ENCODE measurements at regions of chr21 and their contacts with region 1.

Region 1: DNA sequence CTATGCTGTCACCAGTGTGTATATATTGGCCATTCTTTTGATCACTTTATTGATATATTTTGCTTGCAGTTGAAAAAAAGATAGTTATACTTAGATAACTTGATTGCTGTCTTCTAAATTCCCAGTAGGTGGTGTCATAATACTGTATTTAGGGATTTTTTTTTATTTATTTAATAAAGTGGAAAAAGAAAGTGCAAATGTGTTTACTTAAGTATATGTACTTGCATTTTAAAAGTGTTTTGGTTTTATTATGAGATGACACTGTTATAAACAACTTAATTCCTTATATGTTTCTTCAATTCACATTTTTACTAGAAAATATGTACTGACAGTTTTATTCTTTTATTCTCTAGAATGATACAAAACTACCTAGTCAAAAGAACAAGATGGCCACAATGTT is 164.8 kb downstream of the USP25 start:
- DNase-seq: no peak
- H3K4me3 ChIP-seq: no peak overlapping the region
- H3K27ac ChIP-seq: no peak overlapping the region
- H3K4me1 ChIP-seq: no peaks in the 10 kb centered on the region
- H3K27me3 ChIP-seq: no peaks in the 10 kb centered on the region
- CTCF ChIP-seq: peak; percentile 64

Region 2: DNA sequence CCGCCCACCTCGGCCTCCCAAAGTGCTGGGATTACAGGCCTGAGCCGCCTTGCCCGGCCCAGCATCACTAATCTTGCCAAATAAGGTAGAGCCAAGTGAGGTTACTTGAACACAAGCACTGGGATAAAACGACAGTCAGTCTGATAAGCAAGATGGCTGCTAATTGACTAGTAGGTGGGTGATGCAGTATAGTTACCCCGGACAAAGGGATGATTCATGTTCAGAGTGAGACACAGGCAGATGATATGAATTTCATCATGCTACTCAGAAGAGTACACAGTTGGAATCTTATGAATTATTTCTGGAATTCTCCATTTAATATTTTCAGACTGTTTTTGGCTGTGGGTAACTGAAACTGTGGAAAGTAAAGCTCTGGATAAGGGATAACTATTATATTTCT is 13.6 kb after region 1 on chr21:
- CTCF ChIA-PET with region 1: no interaction called
- POLR2A ChIA-PET with region 1: no interaction called
- intact Hi-C with region 1: no loop called
- DNase-seq: no peak
- H3K4me3 ChIP-seq: no peak overlapping the region
- H3K27ac ChIP-seq: no peak overlapping the region
- H3K4me1 ChIP-seq: no peaks in the 10 kb centered on the region
- H3K27me3 ChIP-seq: no peaks in the 10 kb centered on the region
- CTCF ChIP-seq: no peak

Region 3: DNA sequence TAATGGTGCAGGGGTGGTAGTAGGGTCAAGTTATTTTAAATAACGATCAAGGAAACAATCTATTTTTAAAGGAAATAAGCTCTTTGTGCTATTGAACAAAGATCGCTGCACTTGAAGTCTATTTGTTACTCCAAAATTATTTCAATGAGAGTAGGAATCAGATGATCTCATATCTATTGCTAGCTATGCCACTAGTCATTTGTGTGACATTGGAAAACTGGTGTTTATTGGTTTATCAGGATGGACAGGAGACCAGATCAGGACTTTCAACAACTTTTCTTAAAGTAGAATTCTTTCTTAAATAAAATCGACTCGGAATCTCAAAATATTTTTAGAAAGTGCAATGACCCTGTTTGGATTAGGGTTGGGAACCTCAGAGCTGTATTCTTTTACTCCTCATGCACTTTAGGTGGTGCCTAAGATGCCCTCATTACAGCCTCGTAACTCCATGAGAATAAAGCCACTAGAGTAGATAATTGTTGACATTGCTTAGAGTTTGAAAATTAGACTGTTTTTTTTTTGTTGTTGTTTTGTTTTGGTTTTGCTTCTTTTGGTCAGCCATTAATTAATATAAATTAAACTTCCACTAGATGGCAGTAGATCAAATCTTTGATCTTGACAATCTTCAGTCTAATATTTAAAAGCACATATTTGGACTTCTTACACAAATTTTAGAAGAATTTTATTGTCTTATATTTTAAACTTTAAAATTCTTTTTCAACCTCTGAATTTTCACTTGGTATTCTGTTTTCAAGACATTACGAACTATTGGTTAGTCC is 187.6 kb after region 1 on chr21:
- CTCF ChIA-PET with region 1: no interaction called
- POLR2A ChIA-PET with region 1: no interaction called
- intact Hi-C with region 1: no loop called
- DNase-seq: no peak
- H3K4me3 ChIP-seq: no peak overlapping the region
- H3K27ac ChIP-seq: no peak overlapping the region
- H3K4me1 ChIP-seq: no peaks in the 10 kb centered on the region
- H3K27me3 ChIP-seq: no peaks in the 10 kb centered on the region
- CTCF ChIP-seq: peak; percentile 61

Region 4: DNA sequence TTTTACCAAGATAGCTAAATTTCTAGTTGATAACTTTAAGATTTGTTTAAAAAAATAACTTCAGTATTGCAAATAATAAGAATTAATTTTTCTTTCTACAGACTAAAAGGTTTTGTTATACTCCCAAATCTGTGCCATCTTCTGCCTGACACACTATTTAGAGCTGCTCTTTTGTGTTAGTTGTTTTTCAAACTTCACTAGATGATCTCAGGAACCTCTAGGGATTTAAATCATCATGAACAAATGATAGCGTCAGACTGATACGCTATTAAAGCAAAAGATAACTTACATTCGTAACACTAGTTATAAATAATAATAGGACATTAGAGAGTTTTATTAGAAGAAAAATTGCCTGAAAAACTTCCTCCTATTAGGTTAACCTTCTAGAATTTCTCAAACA is 1375.2 kb after region 1 on chr21:
- CTCF ChIA-PET with region 1: no interaction called
- POLR2A ChIA-PET with region 1: no interaction called
- intact Hi-C with region 1: loop called (anchors 10 kb)
- DNase-seq: no peak
- H3K4me3 ChIP-seq: no peak overlapping the region
- H3K27ac ChIP-seq: no peak overlapping the region
- H3K4me1 ChIP-seq: no peaks in the 10 kb centered on the region
- H3K27me3 ChIP-seq: no peaks in the 10 kb centered on the region
- CTCF ChIP-seq: no peak